Breast epithelium (tissue), 4 donors: ENCODE measurements at regions of chr1 and their contacts with region 1.

Region 1: DNA sequence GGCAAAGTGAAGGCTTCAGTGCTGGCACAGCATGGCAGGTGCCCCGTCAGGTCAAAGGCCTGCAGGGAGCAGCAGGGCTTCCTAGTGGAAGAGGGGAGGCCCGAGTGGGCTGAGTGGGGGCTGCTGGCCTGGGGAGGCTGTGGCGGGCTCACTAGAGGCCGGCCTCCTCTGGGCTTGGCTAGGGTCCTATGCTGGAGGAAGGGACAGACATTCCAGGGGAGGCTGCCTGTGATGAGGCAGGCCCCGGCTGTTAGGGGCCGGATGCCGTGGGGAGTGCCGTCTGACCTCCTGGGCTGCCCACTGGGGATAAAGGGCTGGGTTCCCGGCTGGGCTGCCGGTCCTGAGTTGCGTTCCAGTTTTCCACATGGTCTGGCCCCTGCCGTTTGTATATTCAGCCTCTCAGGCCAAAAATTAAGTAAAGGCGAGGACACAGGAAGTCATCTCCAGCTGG is 21.1 kb downstream of the PRXL2B start:
- DNase-seq: peak in 1 of 2 donors; percentile 47
- H3K4me3 ChIP-seq: no peak overlapping the region
- H3K27ac ChIP-seq: no peak overlapping the region
- H3K4me1 ChIP-seq: no peaks in the 10 kb centered on the region
- H3K27me3 ChIP-seq: peaks cover 4 to 28% of the 10 kb centered on the region in 2 donors
- CTCF ChIP-seq: no peak
- POLR2A ChIP-seq: no peak

Region 2: DNA sequence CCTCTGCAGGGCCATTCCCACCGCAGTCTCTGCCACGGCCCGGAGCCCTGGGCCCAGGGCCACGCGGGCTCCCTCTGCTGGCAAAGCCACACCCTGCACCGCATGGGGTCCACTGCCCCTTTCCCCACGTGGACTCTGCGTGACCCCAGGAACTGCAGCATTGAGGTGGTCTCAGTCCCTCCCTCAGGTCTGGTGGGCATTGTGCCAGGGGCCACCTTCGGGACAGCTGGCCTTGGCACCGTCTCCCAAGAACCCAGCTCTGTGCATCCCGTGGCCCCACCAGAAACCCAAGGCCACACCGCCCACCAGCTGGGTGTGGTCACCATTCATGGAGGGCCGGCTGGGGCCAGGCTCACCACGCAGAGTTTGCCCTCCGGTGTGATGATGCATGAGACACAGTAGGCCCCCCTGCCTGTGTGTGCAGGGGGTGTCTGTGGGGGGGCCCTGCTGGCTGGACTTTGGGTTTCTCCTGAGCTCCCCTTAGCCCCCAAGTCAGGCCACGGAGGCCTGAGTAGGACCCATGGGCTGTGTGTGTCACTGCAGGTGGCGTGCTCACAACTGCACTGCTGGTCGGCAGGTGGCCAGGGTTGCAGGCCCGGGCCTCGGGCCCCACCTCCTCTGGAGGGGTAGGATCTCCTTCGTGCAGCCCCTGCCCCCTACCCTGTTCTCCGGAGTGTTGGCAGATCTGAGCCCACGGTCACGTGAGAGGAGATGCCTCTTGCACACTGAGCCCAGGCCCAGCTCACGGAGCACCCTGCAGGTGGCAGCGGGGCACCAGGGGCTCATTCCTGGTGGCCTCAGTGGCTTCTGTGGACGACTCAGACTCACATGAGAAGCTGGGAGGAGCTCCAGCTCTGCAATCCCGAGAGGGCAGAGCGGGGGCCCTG is 1166.4 kb before region 1 on chr1:
- intact Hi-C with region 1: no loop called
- DNase-seq: peak in 1 of 2 donors; percentile 63
- H3K4me3 ChIP-seq: no peak overlapping the region
- H3K27ac ChIP-seq: peak overlapping the region in 1 of 2 donors; percentile 4
- H3K4me1 ChIP-seq: peaks cover 0 to 17% of the 10 kb centered on the region in 2 donors
- H3K27me3 ChIP-seq: no peaks in the 10 kb centered on the region
- CTCF ChIP-seq: peak; percentile 66 to 88 (median 69)
- POLR2A ChIP-seq: no peak

Region 3: DNA sequence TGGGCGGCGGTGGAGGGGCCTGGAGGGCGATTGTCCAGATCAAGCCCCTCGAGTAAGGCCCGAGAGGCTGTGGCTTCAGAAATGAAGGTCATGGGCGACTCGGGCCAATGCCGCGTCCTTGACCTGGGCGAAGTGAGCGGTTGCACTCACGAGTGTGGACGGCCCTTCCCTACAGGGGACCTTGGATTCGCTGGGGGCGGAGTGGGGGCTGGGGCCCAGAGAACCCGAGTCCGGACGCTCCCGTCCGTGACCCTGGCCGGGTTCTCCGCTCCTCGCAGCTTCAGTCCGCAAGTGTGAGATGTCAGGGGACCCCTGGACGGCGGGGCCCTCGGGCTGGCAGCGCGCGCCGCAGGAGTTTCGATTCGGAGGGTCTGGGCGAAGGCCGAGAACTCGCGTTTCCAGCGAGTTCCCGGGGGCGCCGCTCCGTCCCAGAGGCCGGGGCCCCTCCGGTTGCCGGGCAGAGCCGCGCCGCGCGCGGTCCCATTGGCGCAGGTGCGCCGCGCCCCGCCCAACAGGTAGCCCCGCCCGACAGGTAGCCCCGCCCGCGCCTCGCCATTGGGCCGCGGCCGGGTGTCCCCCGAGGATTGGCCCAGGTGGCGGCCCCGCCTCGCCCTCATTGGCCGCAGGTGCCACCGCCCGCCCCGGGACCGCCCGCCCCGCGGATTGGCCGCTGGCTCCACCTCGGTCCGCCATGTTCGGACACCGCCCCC is 557.8 kb before region 1 on chr1 and contains the start of gene PRKCZ:
- intact Hi-C with region 1: loop called (anchors 10 kb)
- DNase-seq: peak; percentile 93 to 95
- H3K4me3 ChIP-seq: peak within 1 kb of the TSS; percentile 42 to 81 (median 75)
- H3K27ac ChIP-seq: peak within 1 kb of the TSS; percentile 61 to 72
- H3K4me1 ChIP-seq: peaks cover 0 to 4% of the 10 kb centered on the region in 2 donors
- H3K27me3 ChIP-seq: peaks cover 5 to 12% of the 10 kb centered on the region in 2 donors
- CTCF ChIP-seq: no peak
- POLR2A ChIP-seq: no peak
- total RNA-seq, gene PRKCZ: 0.64 to 17.9 (median 12.5) TPM

Region 4: DNA sequence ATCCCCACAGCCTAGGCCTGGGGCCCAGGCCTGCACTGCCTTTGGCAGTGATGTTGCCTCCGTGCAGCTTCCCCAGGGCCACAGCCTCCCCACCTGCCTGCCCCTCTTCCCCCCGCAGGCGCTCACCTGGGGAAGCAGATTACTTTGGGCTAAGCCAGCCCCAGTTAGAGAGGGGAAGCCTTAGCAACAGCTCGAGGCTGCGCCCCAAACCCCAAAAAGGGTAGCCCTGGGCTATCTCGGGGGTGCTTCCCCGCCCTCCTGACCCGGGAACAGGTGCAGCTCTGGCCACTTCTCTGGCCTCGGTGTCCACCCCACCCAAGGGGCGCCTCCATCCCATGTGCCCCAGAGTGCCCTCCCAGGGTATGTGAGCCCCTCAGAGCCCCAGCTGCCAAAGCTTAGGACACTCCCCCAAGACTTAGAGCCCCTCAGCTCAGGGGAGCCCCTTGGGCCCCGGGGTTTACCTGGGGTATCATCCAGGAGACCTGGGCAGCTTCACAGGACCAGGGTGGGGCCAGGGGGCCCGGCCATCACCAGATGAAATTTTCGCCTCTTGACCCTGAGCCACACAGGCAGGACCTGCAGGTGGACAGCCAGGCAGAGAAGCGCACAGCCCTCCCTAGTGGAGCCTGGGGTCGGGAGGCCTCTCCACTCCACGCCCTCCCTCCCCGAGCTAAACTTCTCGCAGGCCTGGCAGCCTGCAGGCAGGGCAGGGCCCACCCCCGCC is 197.1 kb after region 1 on chr1:
- intact Hi-C with region 1: loop called (anchors 5 kb)
- DNase-seq: no peak
- H3K4me3 ChIP-seq: no peak overlapping the region
- H3K27ac ChIP-seq: no peak overlapping the region
- H3K4me1 ChIP-seq: no peaks in the 10 kb centered on the region
- H3K27me3 ChIP-seq: peaks cover 0 to 100% of the 10 kb centered on the region in 2 donors
- CTCF ChIP-seq: no peak
- POLR2A ChIP-seq: no peak